PC-9 (cell line): ENCODE measurements at regions of chr2 and their contacts with region 1.

Region 1: DNA sequence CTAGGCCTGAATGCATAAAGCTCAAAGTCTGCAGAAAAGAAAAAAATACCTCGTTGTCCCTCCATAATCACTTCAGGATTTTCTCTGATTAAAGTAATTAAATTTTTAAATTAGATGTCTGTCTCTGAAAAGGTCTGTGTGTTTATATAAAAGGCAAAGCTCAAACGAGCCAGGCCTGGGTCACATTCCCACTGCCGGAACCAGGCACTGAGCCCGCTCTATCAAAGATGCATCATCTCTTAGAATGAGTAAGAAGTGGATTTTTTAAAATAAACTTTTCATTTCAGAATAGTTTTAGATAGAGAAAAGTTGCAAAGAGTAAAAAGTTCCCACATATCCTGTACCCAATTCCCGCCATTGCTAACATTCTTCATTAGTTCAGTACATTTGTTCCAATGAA is 202.1 kb upstream of the KYNU start:
- DNase-seq: no peak
- H3K4me3 ChIP-seq: no peak overlapping the region
- H3K27ac ChIP-seq: no peak overlapping the region
- H3K4me1 ChIP-seq: no peaks in the 10 kb centered on the region
- H3K27me3 ChIP-seq: no peaks in the 10 kb centered on the region
- CTCF ChIP-seq: no peak

Region 2: DNA sequence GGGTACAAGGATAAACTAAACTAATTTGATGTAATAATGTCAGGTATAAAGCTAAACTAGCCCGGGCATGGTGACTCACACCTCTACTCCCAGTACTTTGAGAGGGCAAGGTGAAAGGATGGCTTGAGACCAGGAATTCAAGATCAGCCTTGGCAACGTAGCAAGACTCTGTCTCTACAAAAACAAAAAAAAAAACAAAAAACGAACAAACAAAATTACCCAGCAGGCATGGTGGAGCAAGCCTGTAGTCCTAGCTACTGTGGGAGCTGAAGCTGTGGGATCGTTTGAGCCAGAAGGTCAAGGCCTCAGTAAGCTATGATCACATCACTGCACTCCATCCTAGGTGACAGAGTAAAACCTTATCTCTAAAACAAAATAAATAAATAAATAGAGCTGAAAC is 70.3 kb after region 1 on chr2:
- CTCF ChIA-PET with region 1: no interaction called
- POLR2A ChIA-PET with region 1: no interaction called
- intact Hi-C with region 1: no loop called
- DNase-seq: peak; percentile 25 to 48
- H3K4me3 ChIP-seq: no peak overlapping the region
- H3K27ac ChIP-seq: no peak overlapping the region
- H3K4me1 ChIP-seq: peaks cover 10% of the 10 kb centered on the region; the same call in 1 of the 2 replicates
- H3K27me3 ChIP-seq: no peaks in the 10 kb centered on the region
- CTCF ChIP-seq: no peak

Region 3: DNA sequence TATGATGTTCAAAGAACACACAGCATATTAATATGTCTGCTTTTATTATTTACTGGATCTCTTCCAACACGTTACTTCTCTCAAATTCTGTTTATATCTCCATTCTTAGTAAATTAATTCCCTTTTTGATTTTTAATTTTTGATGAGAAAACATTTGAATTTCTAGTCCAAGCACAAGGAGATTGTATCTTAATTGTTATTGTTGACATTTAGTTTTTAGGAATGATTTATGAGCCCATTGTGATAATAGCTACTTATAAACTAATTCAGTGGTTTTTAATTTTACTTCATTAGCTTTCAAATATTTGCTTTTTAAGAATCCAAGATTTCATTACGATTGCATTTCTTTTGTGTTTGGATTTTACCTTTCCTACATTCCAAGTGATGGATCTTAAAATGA is 322.6 kb after region 1 on chr2:
- CTCF ChIA-PET with region 1: interaction called, 11 read pairs
- POLR2A ChIA-PET with region 1: no interaction called
- intact Hi-C with region 1: no loop called
- DNase-seq: no peak
- H3K4me3 ChIP-seq: no peak overlapping the region
- H3K27ac ChIP-seq: no peak overlapping the region
- H3K4me1 ChIP-seq: no peaks in the 10 kb centered on the region
- H3K27me3 ChIP-seq: no peaks in the 10 kb centered on the region
- CTCF ChIP-seq: no peak